ENCODE measurements at regions of chr13 and their contacts with region 1.

Region 1: GRCh38 chr13:98142380-98143156 is at the start of gene FARP1:
- DNase-seq: peak; percentile 77 to 88 (median 83)
- H3K4me3 ChIP-seq: peak within 1 kb of the TSS; percentile 54 to 95 (median 78)
- H3K27ac ChIP-seq: peak within 1 kb of the TSS in 4 of 5 donors; percentile 76 to 85 (median 81)
- H3K4me1 ChIP-seq: peaks cover 26 to 34% of the 10 kb centered on the region in 2 donors
- H3K27me3 ChIP-seq: no peaks in the 10 kb centered on the region
- CTCF ChIP-seq: peak in 3 of 6 experiments; percentile 47 to 79 (median 76)
- POLR2A ChIP-seq: peak; percentile 21 to 68
- total RNA-seq, gene FARP1: 39.9 to 304 (median 85.4) TPM

Region 2: DNA sequence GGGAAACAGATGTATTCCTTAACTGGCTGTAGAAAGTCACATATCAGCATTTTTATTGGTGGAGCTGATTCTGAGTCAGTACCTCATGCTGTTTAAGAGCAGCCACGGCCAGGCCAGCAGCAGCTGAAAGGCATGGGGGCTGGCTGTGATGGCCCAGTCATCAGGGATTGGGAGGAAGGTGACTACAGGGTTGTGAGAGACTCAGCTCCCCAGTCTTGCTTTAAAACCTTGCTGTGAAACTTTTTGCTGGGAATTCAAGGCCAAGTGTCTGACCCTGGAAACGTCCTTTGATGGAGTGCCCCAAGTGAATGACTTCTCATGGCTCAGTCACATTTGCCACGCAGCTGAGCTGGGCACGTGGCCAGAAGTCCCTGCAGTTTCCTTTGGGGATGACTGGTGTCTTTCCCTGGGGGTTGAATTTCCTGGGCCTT is 73.6 kb after region 1 on chr13:
- intact Hi-C with region 1: loop called (anchors 10 kb)
- DNase-seq: peak; percentile 87 to 96 (median 94)
- H3K4me3 ChIP-seq: no peak overlapping the region
- H3K27ac ChIP-seq: peak overlapping the region; percentile 44 to 87 (median 57)
- H3K4me1 ChIP-seq: peaks cover 24 to 46% of the 10 kb centered on the region in 2 donors
- H3K27me3 ChIP-seq: no peaks in the 10 kb centered on the region
- CTCF ChIP-seq: peak in 2 of 6 experiments; percentile 21 to 36
- POLR2A ChIP-seq: peak in 1 of 2 donors; percentile 47

Region 3: DNA sequence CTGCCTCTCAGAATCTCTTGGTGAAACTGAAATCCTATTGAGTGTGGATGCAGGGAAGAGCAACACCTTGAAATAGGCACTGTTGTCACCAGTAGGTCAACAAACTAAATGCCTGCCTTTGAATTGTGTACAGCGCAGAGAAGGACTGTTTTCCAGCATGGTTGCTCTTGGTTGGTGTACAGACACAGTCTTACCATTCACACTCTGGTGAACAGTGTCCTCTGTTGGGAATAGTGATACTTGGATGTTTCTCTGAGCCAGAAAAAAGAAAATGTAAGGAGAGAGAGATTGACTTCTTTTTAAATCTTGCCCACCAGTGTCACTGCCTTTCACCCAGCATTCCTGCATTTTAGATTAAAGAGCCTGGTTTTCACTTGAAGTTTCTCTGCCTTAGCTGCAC is 254.7 kb after region 1 on chr13:
- intact Hi-C with region 1: loop called in 1 of 2 experiments (anchors 10 kb)
- DNase-seq: no peak
- H3K4me3 ChIP-seq: no peak overlapping the region
- H3K27ac ChIP-seq: no peak overlapping the region
- H3K4me1 ChIP-seq: peaks cover 0 to 3% of the 10 kb centered on the region in 2 donors
- H3K27me3 ChIP-seq: no peaks in the 10 kb centered on the region
- CTCF ChIP-seq: peak in 4 of 6 experiments; percentile 21 to 36 (median 28)
- POLR2A ChIP-seq: no peak